A549 (cell line): ENCODE measurements at regions of chr10 and their contacts with region 1.

Region 1: GRCh38 chr10:71366690-71367089 is 30.0 kb upstream of the CDH23 start:
- DNase-seq: no peak
- ATAC-seq: no peak
- H3K4me3 ChIP-seq: no peak overlapping the region
- H3K27ac ChIP-seq: peak overlapping the region in 1 of 2 experiments; percentile 42; a peak in 1 of 6 replicates
- H3K4me1 ChIP-seq: peaks cover 17% of the 10 kb centered on the region
- CTCF ChIP-seq: no peak
- EP300 ChIP-seq: no peak
- POLR2A ChIP-seq: no peak
- RAD21 ChIP-seq: no peak

Region 2: GRCh38 chr10:71351628-71352319 is 14.9 kb before region 1 on chr10:
- CTCF ChIA-PET with region 1: interaction called, 26 read pairs
- POLR2A ChIA-PET with region 1: interaction called, 3 read pairs
- DNase-seq: no peak
- ATAC-seq: no peak
- H3K4me3 ChIP-seq: no peak overlapping the region
- H3K27ac ChIP-seq: no peak overlapping the region
- H3K4me1 ChIP-seq: peaks cover 30% of the 10 kb centered on the region
- CTCF ChIP-seq: no peak
- EP300 ChIP-seq: no peak
- POLR2A ChIP-seq: no peak
- RAD21 ChIP-seq: no peak

Region 3: GRCh38 chr10:71638064-71638821 is 271.6 kb after region 1 on chr10:
- CTCF ChIA-PET with region 1: no interaction called
- POLR2A ChIA-PET with region 1: no interaction called
- DNase-seq: no peak
- ATAC-seq: peak in 1 of 2 experiments; percentile 22; a peak in 1 of 6 replicates
- H3K4me3 ChIP-seq: no peak overlapping the region
- H3K27ac ChIP-seq: no peak overlapping the region
- H3K4me1 ChIP-seq: no peaks in the 10 kb centered on the region
- CTCF ChIP-seq: no peak
- EP300 ChIP-seq: no peak
- POLR2A ChIP-seq: no peak
- RAD21 ChIP-seq: no peak